Left lung (tissue), 14 donors: ENCODE measurements at regions of chr9 and their contacts with region 1.

Region 1: GRCh38 chr9:89318123-89319014 is at the start of gene SECISBP2:
- DNase-seq: peak; percentile 97 to 99 (median 98)
- ATAC-seq: peak; percentile 97
- H3K4me3 ChIP-seq: peak within 1 kb of the TSS; percentile 41 to 59
- H3K27ac ChIP-seq: peak within 1 kb of the TSS; percentile 99 to 100
- H3K4me1 ChIP-seq: peaks cover 24 to 68% of the 10 kb centered on the region in 2 donors
- H3K27me3 ChIP-seq: no peaks in the 10 kb centered on the region
- CTCF ChIP-seq: peak; percentile 59 to 60
- polyA plus RNA-seq, gene SECISBP2: 77.8 to 92.8 (median 91.2) TPM

Region 2: GRCh38 chr9:89549031-89549644 is 230.8 kb after region 1 on chr9:
- intact Hi-C with region 1: loop called in 1 of 2 experiments (anchors 5 kb)
- DNase-seq: peak; percentile 49 to 94 (median 81)
- ATAC-seq: peak; percentile 99
- H3K4me3 ChIP-seq: no peak overlapping the region
- H3K27ac ChIP-seq: no peak overlapping the region
- H3K4me1 ChIP-seq: peaks cover 0 to 24% of the 10 kb centered on the region in 2 donors
- H3K27me3 ChIP-seq: no peaks in the 10 kb centered on the region
- CTCF ChIP-seq: peak; percentile 77 to 96